ENCODE measurements at regions of chr3 and their contacts with region 1.

Region 1: DNA sequence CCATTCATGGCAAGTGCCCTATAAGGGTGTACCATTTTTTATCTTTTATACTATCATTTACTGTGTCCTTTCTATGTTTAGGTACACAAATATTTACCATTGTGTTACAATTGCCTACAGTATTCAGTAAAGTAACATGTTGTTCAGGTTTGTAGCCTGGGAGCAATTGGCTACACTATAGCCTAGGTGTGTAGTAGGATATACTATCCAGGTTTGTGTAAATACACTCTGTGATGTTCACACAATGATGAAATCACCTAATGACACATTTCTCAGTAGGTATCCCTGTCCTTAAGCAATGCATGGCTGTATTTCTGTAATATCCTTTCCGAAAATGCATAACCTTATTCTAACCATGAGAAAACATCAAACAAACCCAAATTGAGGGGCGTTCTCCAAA is 17.9 kb upstream of the CNOT10 start:
- H3K4me3 Mint-ChIP-seq: no peak overlapping the region
- H3K27ac Mint-ChIP-seq: no peak overlapping the region
- H3K4me1 Mint-ChIP-seq: no peaks in the 10 kb centered on the region
- H3K27me3 Mint-ChIP-seq: peaks cover 2% of the 10 kb centered on the region

Region 2: DNA sequence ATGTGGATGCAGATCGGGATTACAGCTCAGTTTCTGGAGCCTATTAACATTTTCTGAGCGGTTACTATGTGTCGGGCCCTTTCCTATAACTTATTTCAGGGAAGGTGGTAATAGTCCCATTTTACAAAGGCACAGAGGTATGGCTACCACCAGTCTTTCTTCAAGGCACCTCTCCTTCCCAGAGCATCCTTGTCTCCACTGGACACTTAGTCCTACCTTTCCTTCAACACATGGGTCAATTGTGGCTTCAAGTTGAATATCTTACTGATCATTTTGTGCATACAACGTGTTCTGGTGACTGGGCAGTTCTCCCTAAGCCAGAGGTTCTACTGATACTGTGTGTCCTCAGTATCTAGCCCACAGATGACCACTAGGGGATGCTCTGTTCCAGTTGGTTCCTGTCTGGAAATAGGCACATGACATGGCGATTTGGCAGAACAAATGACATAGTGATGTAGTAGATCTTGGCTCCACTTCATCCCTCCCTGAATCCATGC is 489.4 kb before region 1 on chr3:
- intact Hi-C with region 1: loop called (anchors 5 kb)
- H3K4me3 Mint-ChIP-seq: no peak overlapping the region
- H3K27ac Mint-ChIP-seq: no peak overlapping the region
- H3K4me1 Mint-ChIP-seq: peaks cover 19% of the 10 kb centered on the region
- H3K27me3 Mint-ChIP-seq: peaks cover 13% of the 10 kb centered on the region

Region 3: DNA sequence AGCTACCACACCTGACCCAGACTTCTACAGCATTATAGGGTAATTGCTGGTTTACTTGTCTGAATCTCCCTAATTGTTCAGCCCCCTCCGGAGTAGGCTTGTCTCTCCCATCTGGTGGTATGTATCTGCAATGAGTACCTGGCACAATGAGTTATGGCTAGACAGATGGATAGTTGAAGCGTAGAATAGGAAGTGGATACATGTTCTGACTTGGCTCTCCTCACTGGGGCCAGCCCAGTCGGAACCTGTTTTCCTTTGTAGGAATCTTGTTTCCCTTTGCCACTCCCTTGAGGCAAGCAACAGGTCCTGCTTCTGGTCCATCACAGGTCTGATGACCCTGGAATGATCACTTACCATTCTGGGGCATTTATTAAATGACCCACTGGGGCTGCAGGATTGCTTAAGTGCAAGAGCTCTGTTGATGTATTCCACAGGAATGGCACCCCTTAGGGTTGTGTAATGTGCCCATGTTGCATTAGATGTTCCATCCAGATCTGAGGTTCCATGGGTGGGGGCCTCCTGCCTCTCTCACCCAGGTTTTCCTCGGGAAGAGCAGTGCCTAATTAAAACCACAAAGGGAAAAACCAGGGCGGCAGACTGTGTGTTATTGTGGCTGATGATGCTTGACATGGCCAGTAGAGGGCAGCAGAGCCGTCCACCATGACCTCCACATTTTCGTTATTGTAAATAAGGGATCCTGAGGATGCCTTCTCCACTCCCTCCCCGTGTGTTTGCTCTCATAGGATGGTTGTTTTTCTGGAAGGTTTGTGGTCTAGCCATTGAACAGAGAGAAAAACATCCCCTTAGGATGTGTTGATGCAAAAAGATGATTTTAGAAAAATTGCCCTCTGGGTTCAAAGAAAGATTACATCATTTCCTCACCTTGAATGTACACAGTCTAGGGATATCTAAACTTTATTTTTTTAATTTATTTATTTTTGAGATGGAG is 370.6 kb before region 1 on chr3:
- intact Hi-C with region 1: loop called (anchors 10 kb)
- H3K4me3 Mint-ChIP-seq: no peak overlapping the region
- H3K27ac Mint-ChIP-seq: no peak overlapping the region
- H3K4me1 Mint-ChIP-seq: peaks cover 5% of the 10 kb centered on the region
- H3K27me3 Mint-ChIP-seq: no peaks in the 10 kb centered on the region

Region 4: DNA sequence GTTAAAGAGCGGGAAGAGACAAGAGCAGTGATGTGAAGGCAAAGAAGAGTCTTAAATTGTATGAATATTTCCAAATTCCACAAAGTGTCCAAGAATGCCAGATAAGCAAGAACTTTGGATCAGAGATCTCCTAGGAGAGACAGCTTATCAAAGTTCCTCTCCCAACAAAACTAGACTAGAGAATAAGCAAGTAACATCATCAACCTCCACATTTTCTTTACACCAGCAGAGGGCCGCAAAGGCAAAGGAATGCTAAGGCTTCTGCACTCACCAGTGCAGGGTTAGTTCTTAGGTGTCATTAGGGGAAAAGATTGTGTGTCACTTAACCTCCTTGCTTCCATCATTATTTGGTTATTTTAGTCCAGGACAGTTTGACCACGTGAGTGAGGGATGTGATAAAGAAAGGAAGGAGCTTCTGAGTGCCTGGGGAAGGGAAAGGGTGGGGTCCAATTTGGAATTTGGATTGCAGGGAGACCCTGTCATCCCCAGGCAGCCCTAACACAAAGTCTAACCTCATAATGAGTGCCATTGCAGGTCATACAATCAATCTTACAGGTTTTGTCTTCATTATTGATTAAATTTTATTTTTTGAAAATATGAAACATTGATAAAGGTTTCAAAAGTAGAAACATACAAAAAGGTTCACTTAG is 156.9 kb before region 1 on chr3:
- intact Hi-C with region 1: loop called (anchors 1 kb)
- H3K4me3 Mint-ChIP-seq: no peak overlapping the region
- H3K27ac Mint-ChIP-seq: no peak overlapping the region
- H3K4me1 Mint-ChIP-seq: peaks cover 19% of the 10 kb centered on the region
- H3K27me3 Mint-ChIP-seq: no peaks in the 10 kb centered on the region

Region 5: DNA sequence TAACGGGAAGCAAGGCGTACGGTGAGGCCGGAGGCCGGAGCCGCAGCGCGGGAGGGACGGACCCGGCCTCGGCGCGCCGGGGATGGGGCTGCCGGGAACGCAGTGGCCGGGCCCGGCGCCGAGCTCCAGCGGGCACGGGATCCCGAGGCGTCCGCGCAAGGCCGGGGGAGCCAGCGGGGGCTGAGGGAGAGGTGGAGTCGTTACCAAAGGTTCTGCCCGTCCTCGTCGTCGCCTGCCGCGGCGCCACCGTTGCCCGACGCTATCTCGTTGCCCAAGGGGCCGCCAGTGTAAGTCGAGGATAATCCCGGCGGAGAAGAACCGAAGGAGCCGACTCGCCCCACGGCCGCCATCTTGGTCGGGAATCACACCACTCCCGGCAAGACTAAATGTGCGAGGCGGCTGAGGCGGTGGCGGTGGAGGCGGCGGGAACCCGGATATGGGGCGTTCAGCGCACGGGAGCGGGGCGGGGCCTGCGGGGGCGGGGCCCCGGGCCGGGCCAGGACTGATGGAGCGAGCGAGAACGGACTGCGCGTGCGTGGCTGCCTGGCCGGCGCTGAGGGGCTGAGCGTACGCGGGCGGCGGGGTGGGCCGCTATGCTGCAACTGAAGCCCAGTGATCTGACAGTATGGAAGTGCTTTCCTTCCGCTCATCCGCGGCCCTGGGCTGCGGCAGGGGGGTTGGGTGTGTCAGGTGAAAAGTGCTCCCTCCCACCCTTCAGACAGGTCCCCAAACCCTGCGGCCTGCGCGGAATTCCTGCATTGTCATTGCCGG is 96.5 kb before region 1 on chr3 and contains the start of gene DYNC1LI1:
- intact Hi-C with region 1: loop called (anchors 10 kb)
- H3K4me3 Mint-ChIP-seq: peak within 1 kb of the TSS; percentile 87
- H3K27ac Mint-ChIP-seq: peak within 1 kb of the TSS; percentile 92
- H3K4me1 Mint-ChIP-seq: peaks cover 16% of the 10 kb centered on the region
- H3K27me3 Mint-ChIP-seq: no peaks in the 10 kb centered on the region

Region 6: GRCh38 chr3:33287672-33288282 is 620.7 kb after region 1 on chr3:
- intact Hi-C with region 1: no loop called
- H3K4me3 Mint-ChIP-seq: no peak overlapping the region
- H3K27ac Mint-ChIP-seq: no peak overlapping the region
- H3K4me1 Mint-ChIP-seq: no peaks in the 10 kb centered on the region
- H3K27me3 Mint-ChIP-seq: no peaks in the 10 kb centered on the region